Aorta (tissue), 5 donors: ENCODE measurements at regions of chr2 and their contacts with region 1.

Region 1: GRCh38 chr2:152717228-152718075 is at the start of gene PRPF40A:
- DNase-seq: peak; percentile 99 to 100
- ATAC-seq: peak; percentile 97
- H3K4me3 ChIP-seq: peak within 1 kb of the TSS; percentile 77 to 91
- H3K27ac ChIP-seq: peak within 1 kb of the TSS; percentile 62 to 87
- H3K4me1 ChIP-seq: peaks cover 0 to 6% of the 10 kb centered on the region in 2 donors
- H3K27me3 ChIP-seq: no peaks in the 10 kb centered on the region
- total RNA-seq, gene PRPF40A: 59.4 to 73.3 TPM

Region 2: GRCh38 chr2:152175458-152176325 is 541.8 kb before region 1 on chr2 and contains the start of gene STAM2:
- intact Hi-C with region 1: loop called in 1 of 2 experiments (anchors 5 kb)
- DNase-seq: peak; percentile 96 to 98
- ATAC-seq: peak; percentile 99
- H3K4me3 ChIP-seq: peak within 1 kb of the TSS; percentile 82 to 98
- H3K27ac ChIP-seq: peak within 1 kb of the TSS; percentile 62 to 66
- H3K4me1 ChIP-seq: peaks cover 0 to 2% of the 10 kb centered on the region in 2 donors
- H3K27me3 ChIP-seq: no peaks in the 10 kb centered on the region
- total RNA-seq, gene STAM2: 46.2 to 46.8 TPM

Region 3: DNA sequence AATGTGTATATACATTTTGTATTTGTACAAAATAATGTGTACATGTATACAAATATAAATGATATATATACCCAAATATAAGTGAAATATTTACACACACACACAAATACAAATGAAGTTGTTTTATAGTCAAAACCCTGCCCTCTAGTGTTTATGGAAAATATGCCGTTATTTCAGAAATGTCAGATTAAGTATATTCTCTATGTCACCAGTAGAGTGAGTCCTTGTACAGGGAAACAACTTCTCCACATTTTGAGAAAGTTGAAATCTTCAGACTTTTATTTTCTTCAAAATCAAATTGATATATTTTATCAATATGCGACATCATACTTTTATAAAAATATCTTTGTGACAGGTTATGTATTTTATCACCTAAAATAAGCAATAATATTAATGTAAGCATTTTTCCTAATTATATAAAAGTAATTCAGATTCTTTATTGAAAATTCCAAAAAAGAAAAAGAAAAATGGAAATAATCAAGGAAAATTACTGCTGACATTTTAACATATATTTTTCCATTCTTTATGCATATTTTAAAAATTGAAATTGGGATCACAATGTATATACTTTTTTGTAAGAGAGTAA is 23.4 kb after region 1 on chr2:
- intact Hi-C with region 1: no loop called
- DNase-seq: no peak
- ATAC-seq: no peak
- H3K4me3 ChIP-seq: no peak overlapping the region
- H3K27ac ChIP-seq: no peak overlapping the region
- H3K4me1 ChIP-seq: no peaks in the 10 kb centered on the region
- H3K27me3 ChIP-seq: no peaks in the 10 kb centered on the region

Region 4: DNA sequence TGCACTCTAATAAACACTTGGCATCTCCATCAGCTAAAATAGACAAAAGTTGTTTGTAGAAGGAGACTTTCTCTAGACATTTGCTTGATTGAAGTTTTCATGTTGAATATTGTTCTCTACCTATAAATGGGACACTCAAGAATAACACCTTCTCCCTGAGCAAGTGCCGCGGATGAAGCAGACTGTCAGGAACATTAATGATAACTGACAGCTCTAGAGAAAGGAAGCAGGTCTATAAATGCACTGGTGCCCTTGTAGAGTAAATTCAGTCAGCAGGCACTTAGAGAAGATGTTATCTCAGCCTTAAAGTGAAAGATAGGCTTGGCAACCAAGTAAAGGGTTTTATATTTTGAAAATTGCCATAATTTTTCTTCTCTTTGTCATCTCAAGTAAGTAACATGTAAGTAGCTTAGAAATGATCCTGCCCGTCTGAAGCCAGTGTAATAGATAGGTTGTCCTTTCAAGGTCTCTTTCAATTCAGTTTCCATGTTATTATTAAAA is 225.5 kb after region 1 on chr2:
- intact Hi-C with region 1: no loop called
- DNase-seq: no peak
- ATAC-seq: no peak
- H3K4me3 ChIP-seq: no peak overlapping the region
- H3K27ac ChIP-seq: no peak overlapping the region
- H3K4me1 ChIP-seq: no peaks in the 10 kb centered on the region
- H3K27me3 ChIP-seq: no peaks in the 10 kb centered on the region